HCT116 (cell line): ENCODE measurements at regions of chr12 and their contacts with region 1.

Region 1: DNA sequence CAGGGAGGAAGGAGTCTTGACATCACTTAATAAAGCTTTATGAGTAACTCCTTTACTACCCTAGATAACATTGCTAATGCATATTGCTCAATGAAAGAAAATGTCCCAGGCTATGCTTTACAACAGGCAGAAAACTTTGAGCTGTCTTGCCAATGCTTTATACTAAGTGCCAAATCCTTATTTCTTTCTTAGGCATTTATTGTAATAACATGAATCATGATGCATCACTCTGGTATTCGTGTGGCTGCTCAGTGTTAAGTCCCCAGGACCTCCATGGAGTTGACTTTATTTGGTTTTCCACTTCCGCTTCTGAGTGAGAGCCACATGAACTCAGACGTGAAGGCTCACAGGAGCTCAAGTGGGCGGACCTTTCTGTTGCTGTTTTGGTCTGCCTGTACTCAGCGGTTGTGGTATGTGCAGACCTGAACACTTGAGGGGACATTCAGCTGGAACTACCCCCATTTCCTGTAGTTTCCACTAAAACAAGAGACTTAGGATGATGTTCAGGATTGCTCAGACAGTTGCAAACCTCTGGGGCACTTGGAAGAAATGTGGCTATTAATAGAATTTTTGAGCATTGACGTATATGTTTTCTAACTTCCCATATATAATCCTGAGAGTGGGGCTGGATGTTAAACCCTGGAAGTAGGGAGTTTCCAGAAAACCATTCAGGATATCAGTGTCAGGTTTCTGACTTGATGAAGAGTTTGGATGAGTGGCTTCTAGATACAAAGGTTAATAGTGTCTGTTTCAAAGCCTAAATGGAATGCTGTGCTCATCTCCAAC is 258.6 kb downstream of the MSRB3 start:
- DNase-seq: peak; percentile 100
- ATAC-seq: peak; percentile 74
- H3K4me3 ChIP-seq: no peak overlapping the region
- H3K27ac ChIP-seq: peak overlapping the region; percentile 99
- H3K4me1 ChIP-seq: peaks cover 60 to 68% of the 10 kb centered on the region in 2 experiments
- H3K27me3 ChIP-seq: no peaks in the 10 kb centered on the region
- CTCF ChIP-seq: no peak
- POLR2A ChIP-seq: no peak
- RAD21 ChIP-seq: no peak

Region 2: GRCh38 chr12:65313719-65314317 is 223.3 kb before region 1 on chr12:
- CTCF ChIA-PET with region 1: no interaction called
- POLR2A ChIA-PET with region 1: interaction called, 4 read pairs
- RAD21 ChIA-PET with region 1: interaction called in 1 of 2 experiments, 3 read pairs
- intact Hi-C with region 1: loop called (anchors 2 kb)
- DNase-seq: peak; percentile 33
- ATAC-seq: peak; percentile 58; the same call in 1 of the 2 replicates
- H3K4me3 ChIP-seq: no peak overlapping the region; a peak in 1 of 4 replicates
- H3K27ac ChIP-seq: peak overlapping the region; percentile 95; the same call in 1 of the 2 replicates
- H3K4me1 ChIP-seq: peaks cover 41 to 91% of the 10 kb centered on the region in 2 experiments
- H3K27me3 ChIP-seq: no peaks in the 10 kb centered on the region
- CTCF ChIP-seq: peak; percentile 45 to 78 (median 73); a peak in 5 of 6 replicates
- POLR2A ChIP-seq: no peak
- RAD21 ChIP-seq: peak; percentile 94

Region 3: DNA sequence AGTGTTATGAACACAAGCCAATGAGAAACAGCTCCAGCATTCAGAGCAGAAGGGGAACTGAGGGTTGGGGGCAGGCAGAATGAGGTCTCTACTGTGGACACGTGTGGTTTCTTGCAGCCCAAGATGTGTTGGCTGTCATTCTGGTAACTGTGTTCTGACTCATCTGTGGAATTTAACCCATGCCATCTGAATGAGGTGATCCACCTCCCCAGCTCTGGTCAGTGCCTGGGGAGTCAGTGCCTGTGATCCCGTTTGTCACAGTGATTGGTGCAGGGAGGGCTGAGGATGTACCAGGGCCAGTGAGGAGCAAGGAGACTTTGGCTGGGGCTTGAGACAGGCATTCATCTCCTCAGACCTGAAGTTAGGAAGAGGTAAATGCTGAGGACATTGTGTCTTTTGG is 41.8 kb before region 1 on chr12:
- CTCF ChIA-PET with region 1: no interaction called
- POLR2A ChIA-PET with region 1: interaction called, 15 read pairs
- RAD21 ChIA-PET with region 1: no interaction called
- intact Hi-C with region 1: no loop called
- DNase-seq: peak; percentile 88
- ATAC-seq: peak; percentile 86
- H3K4me3 ChIP-seq: no peak overlapping the region
- H3K27ac ChIP-seq: peak overlapping the region; percentile 87
- H3K4me1 ChIP-seq: peaks cover 84 to 86% of the 10 kb centered on the region in 2 experiments
- H3K27me3 ChIP-seq: no peaks in the 10 kb centered on the region
- CTCF ChIP-seq: no peak
- POLR2A ChIP-seq: peak; percentile 35
- RAD21 ChIP-seq: no peak

Region 4: DNA sequence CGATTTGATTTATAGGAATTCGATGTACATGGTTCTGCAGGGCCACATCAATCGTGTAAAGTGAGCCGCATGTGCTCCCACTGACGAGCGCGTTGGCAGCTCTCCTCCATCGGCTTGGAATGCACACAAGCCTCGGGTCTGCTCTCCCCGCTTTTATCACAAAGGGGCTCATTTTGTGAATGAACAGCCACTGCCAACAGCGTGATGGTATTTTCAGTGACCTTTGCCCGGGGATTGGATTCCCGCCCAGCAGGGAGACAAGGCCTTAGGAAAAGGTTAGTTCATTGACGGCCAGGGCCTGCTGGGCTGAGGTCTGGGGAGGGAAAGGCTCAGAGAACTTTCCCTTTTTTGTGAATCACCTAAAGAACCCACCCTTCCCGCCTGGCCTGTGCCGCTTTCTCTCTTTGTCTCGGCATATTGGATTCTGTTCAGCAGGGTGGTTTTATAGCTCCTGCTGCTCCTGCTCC is 26.5 kb before region 1 on chr12:
- CTCF ChIA-PET with region 1: no interaction called
- POLR2A ChIA-PET with region 1: interaction called, 22 read pairs
- RAD21 ChIA-PET with region 1: interaction called in 1 of 2 experiments, 4 read pairs
- intact Hi-C with region 1: no loop called
- DNase-seq: peak; percentile 84
- ATAC-seq: peak; percentile 74
- H3K4me3 ChIP-seq: no peak overlapping the region
- H3K27ac ChIP-seq: peak overlapping the region; percentile 93
- H3K4me1 ChIP-seq: peaks cover 52 to 97% of the 10 kb centered on the region in 2 experiments
- H3K27me3 ChIP-seq: no peaks in the 10 kb centered on the region
- CTCF ChIP-seq: no peak
- POLR2A ChIP-seq: peak; percentile 17
- RAD21 ChIP-seq: no peak

Region 5: DNA sequence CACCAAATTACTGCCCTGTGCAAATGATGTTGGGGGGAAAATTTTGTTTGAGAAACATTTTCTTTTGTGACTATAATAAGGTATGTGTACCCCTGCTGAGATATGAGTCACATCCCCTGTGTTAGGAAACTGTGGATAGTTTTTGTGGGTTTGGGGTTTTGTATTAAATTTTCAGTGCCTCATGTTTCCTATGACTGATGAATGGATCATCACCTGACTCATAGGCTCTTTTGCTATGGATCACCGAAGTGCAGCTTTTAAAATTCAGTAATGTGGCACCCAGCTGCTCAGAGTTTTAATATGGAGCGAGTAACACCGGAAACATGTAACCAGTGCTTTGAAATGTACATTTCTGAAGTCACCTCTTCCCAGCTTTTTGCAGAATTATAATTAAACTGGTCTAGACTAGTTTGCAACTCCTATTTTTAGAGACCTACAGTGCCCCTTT is 119.9 kb after region 1 on chr12:
- CTCF ChIA-PET with region 1: no interaction called
- POLR2A ChIA-PET with region 1: interaction called, 3 read pairs
- RAD21 ChIA-PET with region 1: no interaction called
- intact Hi-C with region 1: loop called (anchors 2 kb)
- DNase-seq: peak; percentile 97
- ATAC-seq: peak; percentile 84
- H3K4me3 ChIP-seq: no peak overlapping the region
- H3K27ac ChIP-seq: peak overlapping the region; percentile 100
- H3K4me1 ChIP-seq: peaks cover 47 to 72% of the 10 kb centered on the region in 2 experiments
- H3K27me3 ChIP-seq: no peaks in the 10 kb centered on the region
- CTCF ChIP-seq: no peak
- POLR2A ChIP-seq: no peak
- RAD21 ChIP-seq: peak; percentile 56; the same call in 1 of the 2 replicates

Region 6: DNA sequence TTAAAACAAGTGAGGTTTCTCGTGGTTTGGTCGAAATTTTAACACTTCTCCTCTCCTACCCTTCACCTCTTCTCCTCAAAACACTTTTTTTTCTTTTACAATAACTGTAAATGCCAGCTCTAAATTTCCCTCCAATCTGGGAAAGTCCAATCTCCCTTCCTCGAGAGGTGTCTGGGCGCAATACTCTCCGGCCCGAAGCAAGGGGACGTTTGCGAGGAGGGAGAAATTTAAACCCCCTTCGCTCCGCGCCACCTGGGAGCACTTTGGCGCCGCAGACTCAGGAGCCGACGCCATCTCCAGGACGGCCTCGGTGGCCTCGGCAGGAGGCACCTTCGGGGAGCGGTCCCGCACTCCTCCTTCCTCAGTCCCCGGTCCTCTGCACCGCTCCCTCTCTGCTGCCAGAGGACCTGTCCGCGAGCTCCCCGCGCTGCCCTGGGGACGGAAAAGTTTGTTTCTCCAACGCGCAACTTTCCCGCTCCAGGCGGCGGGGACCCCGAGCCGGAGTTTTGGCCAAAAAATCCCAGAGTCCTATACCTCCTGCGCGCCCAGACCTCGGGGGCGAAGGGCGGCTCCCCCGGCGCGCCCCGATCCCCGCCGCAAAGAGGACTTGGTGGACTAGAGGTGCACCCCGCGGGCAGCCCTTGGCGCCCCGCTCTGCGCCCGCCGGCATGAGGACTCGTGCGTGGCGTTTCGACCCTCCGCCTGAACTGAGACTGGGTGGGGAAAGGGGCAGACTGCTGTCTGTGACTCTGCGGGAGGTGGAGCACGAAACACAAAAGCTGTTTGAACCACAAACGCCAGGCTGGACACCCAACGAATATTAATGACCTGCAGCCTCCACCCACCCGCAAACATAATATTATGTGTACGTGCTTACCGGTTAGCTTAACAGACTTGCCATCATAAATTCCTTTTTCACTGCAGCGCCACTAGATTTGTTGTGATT is 192.1 kb after region 1 on chr12:
- CTCF ChIA-PET with region 1: no interaction called
- POLR2A ChIA-PET with region 1: interaction called, 5 read pairs
- RAD21 ChIA-PET with region 1: no interaction called
- intact Hi-C with region 1: loop called (anchors 5 kb)
- DNase-seq: peak; percentile 59
- ATAC-seq: peak; percentile 71
- H3K4me3 ChIP-seq: peak overlapping the region; percentile 57 to 69
- H3K27ac ChIP-seq: peak overlapping the region; percentile 98
- H3K4me1 ChIP-seq: peaks cover 47 to 62% of the 10 kb centered on the region in 2 experiments
- H3K27me3 ChIP-seq: no peaks in the 10 kb centered on the region
- CTCF ChIP-seq: no peak
- POLR2A ChIP-seq: no peak
- RAD21 ChIP-seq: no peak